ENCODE measurements at regions of chr9 and their contacts with region 1.

Region 1: GRCh38 chr9:77488439-77489126 is 159.5 kb downstream of the GNA14 start:
- DNase-seq: peak; percentile 61
- H3K4me3 Mint-ChIP-seq: peak overlapping the region; percentile 75
- H3K27ac Mint-ChIP-seq: no peak overlapping the region
- H3K4me1 Mint-ChIP-seq: peaks cover 13% of the 10 kb centered on the region
- H3K27me3 Mint-ChIP-seq: peaks cover 4% of the 10 kb centered on the region

Region 2: GRCh38 chr9:77433675-77434445 is 54.7 kb before region 1 on chr9:
- intact Hi-C with region 1: loop called (anchors 1 kb)
- DNase-seq: peak; percentile 82
- H3K4me3 Mint-ChIP-seq: no peak overlapping the region
- H3K27ac Mint-ChIP-seq: no peak overlapping the region
- H3K4me1 Mint-ChIP-seq: no peaks in the 10 kb centered on the region
- H3K27me3 Mint-ChIP-seq: peaks cover 2% of the 10 kb centered on the region